A549 (cell line): ENCODE measurements at regions of chr6 and their contacts with region 1.

Region 1: GRCh38 chr6:24855395-24856245 is 56.9 kb upstream of the ARMH2 start:
- DNase-seq: peak; percentile 59 to 62
- ATAC-seq: peak; percentile 79 to 83; a peak in 5 of 6 replicates
- H3K4me3 ChIP-seq: no peak overlapping the region; the same call in 2 of the 3 replicates
- H3K27ac ChIP-seq: peak overlapping the region in 1 of 2 experiments; percentile 57; a peak in 2 of 6 replicates
- H3K4me1 ChIP-seq: no peaks in the 10 kb centered on the region
- CTCF ChIP-seq: peak; percentile 80
- EP300 ChIP-seq: no peak
- POLR2A ChIP-seq: no peak
- RAD21 ChIP-seq: peak; percentile 83 to 84

Region 2: GRCh38 chr6:24255676-24256075 is 599.9 kb before region 1 on chr6:
- CTCF ChIA-PET with region 1: no interaction called
- POLR2A ChIA-PET with region 1: no interaction called
- DNase-seq: no peak
- ATAC-seq: no peak
- H3K4me3 ChIP-seq: no peak overlapping the region
- H3K27ac ChIP-seq: no peak overlapping the region
- H3K4me1 ChIP-seq: no peaks in the 10 kb centered on the region
- CTCF ChIP-seq: no peak
- EP300 ChIP-seq: no peak
- POLR2A ChIP-seq: no peak
- RAD21 ChIP-seq: no peak

Region 3: DNA sequence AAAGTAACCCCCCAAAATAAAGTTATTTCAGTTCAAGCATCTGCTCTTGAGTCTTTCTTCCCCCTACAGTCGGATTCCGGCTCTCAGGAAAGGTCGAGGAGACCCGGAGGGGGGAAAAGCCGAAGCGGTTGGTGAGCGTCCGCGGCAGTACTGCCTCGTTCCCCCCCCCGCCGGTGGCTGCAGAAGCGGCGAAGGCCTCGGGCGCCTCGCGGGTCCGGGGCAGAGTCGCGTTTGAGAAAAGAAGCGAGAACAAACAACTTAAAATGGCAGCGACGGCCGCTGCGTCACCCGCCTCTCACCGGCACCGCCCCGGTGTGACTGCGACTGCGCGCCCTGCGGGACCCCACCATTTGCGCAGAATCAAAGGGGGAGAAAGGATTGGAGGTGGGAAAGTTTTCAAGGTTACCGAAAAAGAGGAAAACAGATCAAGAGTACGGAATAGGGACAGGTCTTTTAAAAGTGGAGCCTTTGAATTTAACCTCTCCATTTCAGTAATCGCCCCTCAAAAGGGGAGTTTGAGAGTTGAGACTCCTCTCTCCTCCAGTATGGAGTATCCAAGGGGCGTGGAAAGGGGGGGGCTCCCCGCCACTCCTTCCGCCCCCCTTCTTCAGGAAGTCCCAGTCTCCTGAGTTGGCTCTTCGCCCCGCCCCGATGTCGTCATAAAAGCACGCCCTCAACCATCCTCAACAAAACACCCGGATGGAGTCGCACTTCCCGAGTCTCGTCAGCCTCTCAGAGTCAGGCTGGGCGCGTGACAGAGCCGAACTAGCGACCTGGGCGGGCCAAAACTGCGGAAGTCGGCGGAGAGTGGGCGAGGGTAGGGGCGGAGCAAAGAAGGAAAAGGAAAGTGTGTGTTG is 134.8 kb before region 1 on chr6:
- CTCF ChIA-PET with region 1: no interaction called
- POLR2A ChIA-PET with region 1: no interaction called
- DNase-seq: peak; percentile 93 to 99
- ATAC-seq: peak; percentile 92 to 96
- H3K4me3 ChIP-seq: peak overlapping the region; percentile 99
- H3K27ac ChIP-seq: peak overlapping the region; percentile 99
- H3K4me1 ChIP-seq: peaks cover 25% of the 10 kb centered on the region
- CTCF ChIP-seq: no peak
- EP300 ChIP-seq: no peak
- POLR2A ChIP-seq: peak; percentile 91
- RAD21 ChIP-seq: no peak

Region 4: DNA sequence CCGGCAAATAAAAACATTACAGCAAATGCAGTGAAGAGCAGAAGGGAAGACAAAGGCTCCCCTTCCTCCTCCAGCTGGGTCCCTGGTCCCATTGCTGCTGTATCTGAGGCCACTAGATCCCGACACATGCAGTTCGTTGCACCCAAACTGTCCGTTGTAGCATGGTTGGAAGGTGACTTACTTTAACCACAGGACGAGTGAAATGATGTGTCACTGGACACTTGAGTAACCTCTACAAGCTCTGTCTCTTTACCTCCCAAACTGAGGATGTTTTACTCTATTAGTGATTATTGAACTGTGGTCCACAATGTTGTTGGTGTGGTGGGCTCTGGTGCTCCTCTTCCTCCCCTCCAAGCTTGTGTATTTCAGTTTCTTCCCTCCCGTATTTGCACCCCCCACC is 10.7 kb before region 1 on chr6:
- CTCF ChIA-PET with region 1: interaction called, 16 read pairs
- POLR2A ChIA-PET with region 1: no interaction called
- DNase-seq: no peak
- ATAC-seq: no peak
- H3K4me3 ChIP-seq: no peak overlapping the region
- H3K27ac ChIP-seq: no peak overlapping the region
- H3K4me1 ChIP-seq: no peaks in the 10 kb centered on the region
- CTCF ChIP-seq: no peak
- EP300 ChIP-seq: no peak
- POLR2A ChIP-seq: no peak
- RAD21 ChIP-seq: no peak

Region 5: GRCh38 chr6:24991810-24992467 is 136.3 kb after region 1 on chr6:
- CTCF ChIA-PET with region 1: interaction called, 17 read pairs
- POLR2A ChIA-PET with region 1: no interaction called
- DNase-seq: peak; percentile 22 to 40
- ATAC-seq: peak in 1 of 2 experiments; percentile 76; a peak in 3 of 6 replicates
- H3K4me3 ChIP-seq: no peak overlapping the region
- H3K27ac ChIP-seq: no peak overlapping the region
- H3K4me1 ChIP-seq: no peaks in the 10 kb centered on the region
- CTCF ChIP-seq: peak; percentile 35
- EP300 ChIP-seq: no peak
- POLR2A ChIP-seq: no peak
- RAD21 ChIP-seq: peak; percentile 27 to 37; a peak in 2 of 5 replicates

Region 6: GRCh38 chr6:25061289-25061936 is 205.8 kb after region 1 on chr6:
- CTCF ChIA-PET with region 1: interaction called, 10 read pairs
- POLR2A ChIA-PET with region 1: no interaction called
- DNase-seq: no peak
- ATAC-seq: no peak
- H3K4me3 ChIP-seq: no peak overlapping the region
- H3K27ac ChIP-seq: no peak overlapping the region
- H3K4me1 ChIP-seq: no peaks in the 10 kb centered on the region
- CTCF ChIP-seq: no peak
- EP300 ChIP-seq: no peak
- POLR2A ChIP-seq: no peak
- RAD21 ChIP-seq: no peak

Region 7: DNA sequence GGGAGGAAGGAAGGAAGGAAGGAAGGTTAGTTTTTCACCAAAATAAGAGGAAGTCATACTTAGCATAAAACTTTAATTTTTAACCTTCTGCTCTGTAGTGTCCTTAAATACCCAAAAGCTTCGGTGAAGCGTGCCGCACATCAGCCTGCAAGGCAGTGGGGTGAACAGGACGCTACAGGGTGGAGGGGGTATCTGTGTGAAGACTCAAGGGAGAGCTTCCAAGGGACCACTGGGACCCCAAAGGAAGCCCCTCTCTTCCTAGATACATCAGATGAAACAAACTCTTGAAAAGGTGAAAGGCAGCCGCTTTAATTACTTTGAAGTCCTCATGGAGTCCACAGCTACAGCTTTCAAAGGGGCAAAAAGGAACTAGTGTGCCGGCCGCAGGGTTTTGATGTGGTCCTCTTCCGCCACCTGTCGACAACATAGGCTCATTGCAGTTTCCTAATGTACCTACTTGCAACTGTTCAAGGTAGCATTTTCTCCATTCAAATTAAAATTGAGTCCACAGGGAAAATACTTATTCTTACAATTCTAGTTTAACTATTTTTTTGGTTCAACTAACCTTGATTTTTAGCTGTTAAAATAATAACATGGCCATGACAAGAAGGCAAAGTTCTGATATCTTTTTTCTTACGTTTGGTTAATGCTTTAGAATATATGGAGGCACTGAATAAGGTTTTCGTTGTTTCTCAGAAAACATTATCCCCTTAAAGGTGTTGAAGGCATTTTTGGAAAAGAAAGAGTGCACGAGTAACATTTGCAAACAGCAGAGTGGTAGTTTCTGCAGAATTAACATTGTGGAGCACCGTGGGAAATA is 215.1 kb after region 1 on chr6:
- CTCF ChIA-PET with region 1: interaction called, 28 read pairs
- POLR2A ChIA-PET with region 1: no interaction called
- DNase-seq: peak; percentile 35 to 68
- ATAC-seq: peak; percentile 78 to 86
- H3K4me3 ChIP-seq: no peak overlapping the region
- H3K27ac ChIP-seq: 0 out of 6 replicates have a peak overlapping the region, but pooled peaks of 1 of the 2 experiments have one; percentile 22
- H3K4me1 ChIP-seq: no peaks in the 10 kb centered on the region
- CTCF ChIP-seq: peak; percentile 79
- EP300 ChIP-seq: no peak
- POLR2A ChIP-seq: no peak
- RAD21 ChIP-seq: peak; percentile 84 to 86